AG04449 (cell line): ENCODE measurements at regions of chr12 and their contacts with region 1.

Region 1: DNA sequence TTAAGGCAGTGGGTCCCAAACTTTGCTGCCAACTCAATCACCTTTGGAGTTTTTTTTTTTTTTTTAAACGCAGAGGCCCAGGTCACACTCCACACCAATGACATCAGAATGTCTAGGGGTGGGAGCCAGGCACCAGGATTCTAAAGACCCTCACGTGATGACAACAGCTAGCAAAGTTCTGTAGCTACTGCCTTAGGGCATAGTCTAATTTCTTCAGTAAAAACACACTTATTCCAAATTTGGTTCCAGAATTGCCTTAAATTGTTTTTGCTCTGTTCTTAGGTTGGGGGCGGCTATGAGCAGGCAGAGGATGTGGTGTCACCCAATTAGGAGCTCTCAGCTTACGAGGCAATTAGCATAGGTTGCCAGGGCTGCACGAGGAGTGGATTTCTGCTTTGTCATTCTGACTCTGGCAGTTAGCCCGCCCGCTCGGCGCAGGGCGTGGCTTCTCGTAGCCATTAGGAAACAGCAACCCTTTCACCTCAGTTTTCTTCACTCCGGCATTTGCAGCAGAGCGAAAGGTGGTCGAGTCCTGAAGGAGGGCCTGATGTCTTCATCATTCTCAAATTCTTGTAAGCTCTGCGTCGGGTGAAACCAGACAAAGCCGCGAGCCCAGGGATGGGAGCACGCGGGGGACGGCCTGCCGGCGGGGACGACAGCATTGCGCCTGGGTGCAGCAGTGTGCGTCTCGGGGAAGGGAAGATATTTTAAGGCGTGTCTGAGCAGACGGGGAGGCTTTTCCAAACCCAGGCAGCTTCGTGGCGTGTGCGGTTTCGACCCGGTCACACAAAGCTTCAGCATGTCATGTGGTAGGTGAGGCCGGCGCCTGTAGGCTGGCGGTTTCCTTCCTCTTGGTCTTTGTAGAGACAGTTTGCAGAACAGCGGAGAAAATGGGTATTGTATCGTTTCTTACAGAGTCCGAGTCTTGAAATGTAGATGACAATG is 16.7 kb upstream of the EID3 start:
- DNase-seq: peak; percentile 91
- H3K4me3 ChIP-seq: peak overlapping the region; percentile 91
- CTCF ChIP-seq: no peak

Region 2: GRCh38 chr12:104189915-104190555 is 96.8 kb before region 1 on chr12:
- CTCF ChIA-PET with region 1: no interaction called
- POLR2A ChIA-PET with region 1: no interaction called
- DNase-seq: peak; percentile 80
- H3K4me3 ChIP-seq: no peak overlapping the region
- CTCF ChIP-seq: no peak

Region 3: DNA sequence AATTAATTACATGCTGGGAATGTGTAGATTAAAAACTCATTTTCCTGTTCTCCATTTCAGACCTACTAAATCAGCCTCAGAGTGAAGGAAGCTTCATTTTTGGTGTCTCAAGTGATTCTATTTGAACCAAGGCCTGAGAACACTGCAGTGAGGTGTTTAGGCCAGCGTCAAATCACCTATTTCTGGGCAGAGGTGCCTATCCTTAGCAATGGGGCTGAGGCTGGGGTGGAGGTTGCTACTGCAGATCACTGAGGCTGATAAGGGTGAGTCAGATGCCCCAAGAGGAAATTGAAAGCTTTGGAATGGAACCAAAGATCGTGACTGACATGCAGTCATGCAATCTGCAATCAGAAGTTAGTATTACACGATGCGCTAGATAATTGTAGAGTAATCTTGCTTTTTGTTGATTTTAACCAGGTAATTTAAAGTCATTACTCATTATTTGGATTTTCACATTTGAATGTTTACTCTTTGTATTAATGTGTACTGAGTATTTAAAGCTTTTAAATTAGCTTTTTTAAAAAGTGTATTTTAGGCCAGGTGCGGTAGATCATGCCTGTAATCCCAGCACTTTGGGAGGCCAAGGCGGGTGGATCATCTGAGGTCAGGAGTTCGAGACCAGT is 66.8 kb before region 1 on chr12:
- CTCF ChIA-PET with region 1: interaction called, 8 read pairs
- POLR2A ChIA-PET with region 1: interaction called, 19 read pairs
- DNase-seq: peak; percentile 34
- H3K4me3 ChIP-seq: peak overlapping the region; percentile 2; the same call in 1 of the 2 replicates
- CTCF ChIP-seq: no peak

Region 4: DNA sequence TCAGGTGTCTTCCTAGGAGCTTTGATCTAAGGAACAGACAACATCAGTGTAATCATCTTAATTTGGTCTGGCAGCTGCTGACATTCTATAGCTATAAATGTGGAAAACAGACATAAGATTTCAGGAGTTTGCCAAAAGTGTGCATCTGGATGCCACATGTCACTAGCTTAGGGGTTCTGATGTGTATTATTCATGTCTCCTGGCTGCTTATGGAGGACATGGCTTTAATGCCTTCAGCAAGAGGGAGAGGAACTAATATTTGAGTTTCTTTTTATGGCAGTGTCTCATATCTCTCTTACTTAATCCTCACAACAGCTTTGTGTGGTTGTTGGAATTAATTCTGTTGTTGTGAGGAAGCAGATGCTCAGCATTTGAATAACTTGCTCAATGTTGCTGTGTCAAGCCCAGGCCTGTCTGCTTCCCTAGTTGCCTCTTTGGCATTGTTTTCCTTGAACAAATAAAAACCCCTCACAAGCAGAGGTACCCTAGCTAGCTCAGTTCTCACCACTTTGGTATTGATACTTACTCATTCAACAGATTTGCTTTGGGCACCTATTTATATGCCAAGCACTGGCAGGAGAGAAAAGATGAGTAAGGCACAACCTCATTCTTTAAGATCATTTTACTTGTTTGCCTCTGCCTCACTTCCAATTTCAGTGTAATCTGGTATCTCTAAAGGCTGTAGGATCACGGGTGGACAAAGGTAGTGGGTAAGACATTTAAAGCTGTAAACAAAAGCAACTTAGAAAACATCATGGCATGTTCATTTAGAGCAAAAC is 23.0 kb before region 1 on chr12:
- CTCF ChIA-PET with region 1: no interaction called
- POLR2A ChIA-PET with region 1: no interaction called
- DNase-seq: no peak
- H3K4me3 ChIP-seq: no peak overlapping the region
- CTCF ChIP-seq: no peak

Region 5: GRCh38 chr12:104276273-104277131 is 10.3 kb before region 1 on chr12:
- CTCF ChIA-PET with region 1: interaction called, 6 read pairs
- POLR2A ChIA-PET with region 1: interaction called, 15 read pairs
- DNase-seq: no peak
- H3K4me3 ChIP-seq: no peak overlapping the region
- CTCF ChIP-seq: no peak

Region 6: DNA sequence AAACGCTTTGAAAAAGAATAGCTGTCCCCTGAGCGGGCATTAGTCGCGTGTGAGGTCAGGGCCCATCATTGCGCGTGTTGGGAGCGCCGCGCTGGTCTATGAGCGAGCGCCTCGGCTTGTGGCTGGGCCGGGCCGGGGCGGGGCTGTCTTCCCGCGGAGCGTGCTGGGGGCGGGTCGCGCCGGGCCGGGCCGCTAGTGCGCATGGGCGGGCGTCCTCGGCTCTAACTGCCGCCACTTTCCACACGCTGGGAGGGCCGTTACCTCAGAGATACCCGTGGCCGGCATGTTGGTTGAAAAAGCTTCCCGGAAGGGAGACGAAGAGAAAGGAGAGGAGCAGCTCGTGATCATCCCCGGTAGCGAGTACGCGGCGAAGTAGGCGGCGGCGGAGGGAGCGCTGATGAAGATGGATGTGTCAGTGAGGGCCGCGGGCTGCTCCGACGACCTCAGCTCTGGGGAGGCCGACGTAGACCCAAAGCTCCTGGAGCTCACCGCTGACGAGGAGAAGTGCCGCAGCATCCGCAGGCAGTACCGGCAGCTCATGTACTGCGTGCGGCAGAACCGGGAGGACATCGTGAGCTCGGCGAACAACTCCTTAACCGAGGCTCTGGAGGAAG is 16.8 kb after region 1 on chr12 and contains the start of gene EID3:
- CTCF ChIA-PET with region 1: interaction called, 19 read pairs
- POLR2A ChIA-PET with region 1: interaction called, 16 read pairs
- DNase-seq: no peak
- H3K4me3 ChIP-seq: peak within 1 kb of the TSS; percentile 54
- CTCF ChIP-seq: no peak